Endothelial cell of umbilical vein (primary cell): ENCODE measurements at regions of chr1 and their contacts with region 1.

Region 1: DNA sequence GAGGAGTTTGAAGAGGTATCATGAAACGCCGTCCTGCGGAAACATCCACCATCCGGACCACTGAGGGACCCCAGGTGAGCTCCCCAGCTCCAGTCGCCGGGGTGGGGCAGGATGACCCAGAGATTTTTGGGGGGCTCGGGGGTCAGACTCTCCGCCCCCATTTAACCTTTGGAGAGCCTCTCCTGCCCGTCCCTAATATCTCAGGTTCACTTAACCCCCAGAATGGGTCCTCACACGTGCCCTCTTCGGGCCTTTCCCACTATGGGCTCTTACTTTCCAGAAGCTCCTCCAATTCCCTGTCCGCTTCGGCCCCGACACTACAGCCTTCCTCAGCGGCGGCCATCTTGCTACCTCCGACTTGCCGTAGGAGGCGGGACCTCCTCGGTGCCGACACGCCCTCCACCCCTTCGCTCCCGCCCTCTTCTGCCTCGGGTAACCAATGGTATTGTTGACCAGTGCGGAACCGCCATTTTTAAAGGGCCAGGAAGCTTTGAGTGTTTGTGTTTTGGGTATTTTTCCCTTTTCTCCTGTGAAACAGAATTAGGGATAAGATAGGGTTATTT is at the start of gene PEX19:
- DNase-seq: peak; percentile 95
- H3K4me3 ChIP-seq: peak within 1 kb of the TSS; percentile 65 to 83 (median 72)
- H3K27ac ChIP-seq: peak within 1 kb of the TSS; percentile 45
- H3K4me1 ChIP-seq: peaks cover 9% of the 10 kb centered on the region
- H3K27me3 ChIP-seq: no peaks in the 10 kb centered on the region
- CTCF ChIP-seq: no peak
- POLR2A ChIP-seq: peak; percentile 87
- total RNA-seq, gene PEX19: 31.5 and 38.4 TPM in 2 replicates

Region 2: GRCh38 chr1:159979257-159979656 is 305.6 kb before region 1 on chr1:
- CTCF ChIA-PET with region 1: no interaction called
- POLR2A ChIA-PET with region 1: no interaction called
- dilution Hi-C with region 1: no loop called
- intact Hi-C with region 1: no loop called
- DNase-seq: no peak
- H3K4me3 ChIP-seq: no peak overlapping the region
- H3K27ac ChIP-seq: no peak overlapping the region
- H3K4me1 ChIP-seq: no peaks in the 10 kb centered on the region
- H3K27me3 ChIP-seq: peaks cover 12 to 13% of the 10 kb centered on the region in 2 experiments
- CTCF ChIP-seq: no peak
- POLR2A ChIP-seq: no peak

Region 3: GRCh38 chr1:160205242-160206035 is 79.4 kb before region 1 on chr1 and contains the start of gene PEA15:
- CTCF ChIA-PET with region 1: interaction called, 3 read pairs
- POLR2A ChIA-PET with region 1: no interaction called
- dilution Hi-C with region 1: no loop called
- intact Hi-C with region 1: loop called (anchors 2 kb)
- DNase-seq: peak; percentile 54
- H3K4me3 ChIP-seq: peak within 1 kb of the TSS; percentile 55 to 81 (median 72)
- H3K27ac ChIP-seq: peak within 1 kb of the TSS; percentile 73
- H3K4me1 ChIP-seq: peaks cover 45% of the 10 kb centered on the region
- H3K27me3 ChIP-seq: no peaks in the 10 kb centered on the region
- CTCF ChIP-seq: no peak
- POLR2A ChIP-seq: no peak
- total RNA-seq, gene PEA15: 250 and 270 TPM in 2 replicates

Region 4: GRCh38 chr1:160261893-160262794 is 22.7 kb before region 1 on chr1 and contains the start of gene DCAF8:
- CTCF ChIA-PET with region 1: interaction called, 9 read pairs
- POLR2A ChIA-PET with region 1: interaction called, 7 read pairs
- dilution Hi-C with region 1: no loop called
- intact Hi-C with region 1: loop called (anchors 1 kb)
- DNase-seq: peak; percentile 99
- H3K4me3 ChIP-seq: peak within 1 kb of the TSS; percentile 27 to 87 (median 64)
- H3K27ac ChIP-seq: peak within 1 kb of the TSS; percentile 74
- H3K4me1 ChIP-seq: peaks cover 15% of the 10 kb centered on the region
- H3K27me3 ChIP-seq: no peaks in the 10 kb centered on the region
- CTCF ChIP-seq: no peak
- POLR2A ChIP-seq: peak; percentile 91
- total RNA-seq, gene DCAF8: 99.9 and 106 TPM in 2 replicates

Region 5: DNA sequence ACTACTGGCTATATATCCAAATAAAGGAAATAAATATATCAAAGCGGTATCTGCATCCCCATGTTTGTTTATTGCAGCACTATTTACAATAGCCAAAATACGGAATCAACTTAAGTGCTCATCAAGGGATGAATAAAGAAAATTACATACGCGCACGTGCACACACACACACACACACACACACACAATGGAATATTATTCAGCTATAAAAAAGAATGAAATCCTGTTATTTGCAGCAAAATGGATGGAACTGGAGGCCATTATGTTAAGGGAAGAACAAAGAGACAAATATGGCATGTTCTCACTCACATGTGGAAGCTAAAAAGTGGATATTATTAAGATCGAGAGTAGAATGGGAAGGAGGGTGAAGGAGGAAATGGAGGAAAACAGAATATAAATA is 38.0 kb after region 1 on chr1:
- CTCF ChIA-PET with region 1: interaction called, 3 read pairs
- POLR2A ChIA-PET with region 1: no interaction called
- dilution Hi-C with region 1: no loop called
- intact Hi-C with region 1: loop called (anchors 5 kb)
- DNase-seq: no peak
- H3K4me3 ChIP-seq: no peak overlapping the region
- H3K27ac ChIP-seq: no peak overlapping the region
- H3K4me1 ChIP-seq: no peaks in the 10 kb centered on the region
- H3K27me3 ChIP-seq: no peaks in the 10 kb centered on the region
- CTCF ChIP-seq: no peak
- POLR2A ChIP-seq: no peak

Region 6: DNA sequence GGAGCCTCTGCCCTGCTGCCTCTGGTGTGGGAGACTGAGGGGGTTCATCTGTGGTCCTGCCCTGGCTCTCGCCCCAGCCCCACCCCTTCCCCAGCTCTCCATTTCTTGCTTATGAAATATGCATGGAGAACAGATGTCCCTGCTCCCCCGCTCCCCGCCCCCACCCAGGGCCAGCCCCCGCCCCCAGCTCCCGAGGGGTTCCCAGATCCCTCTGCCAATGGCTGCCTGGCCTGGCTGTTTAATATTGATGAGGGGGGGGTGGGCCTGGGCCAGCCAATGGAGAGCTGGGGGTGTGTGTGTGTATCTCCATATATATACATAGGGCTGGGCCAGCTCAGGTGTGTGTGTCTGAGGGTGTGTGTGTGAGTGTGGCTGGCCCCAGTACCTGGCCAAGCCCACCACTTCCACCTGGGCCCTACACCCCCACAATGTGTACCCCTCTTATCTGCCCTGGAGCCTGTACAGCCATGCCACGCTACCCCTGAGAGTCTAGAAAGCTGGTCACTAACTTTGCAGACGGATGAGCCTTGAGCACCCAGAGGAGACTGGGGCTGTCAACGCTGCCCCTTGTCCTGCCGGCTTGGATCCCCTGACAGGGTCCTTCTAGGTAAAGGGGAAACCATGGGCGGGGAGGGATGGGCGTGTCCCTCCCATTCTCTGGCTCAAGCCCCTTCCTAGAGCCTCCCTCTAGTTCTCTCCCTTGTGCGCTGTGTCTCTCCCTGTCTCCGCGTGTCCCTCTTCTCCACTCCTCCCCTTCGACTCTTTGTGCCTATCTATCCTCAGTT is 82.1 kb after region 1 on chr1 and contains the start of gene NHLH1:
- CTCF ChIA-PET with region 1: no interaction called
- POLR2A ChIA-PET with region 1: no interaction called
- dilution Hi-C with region 1: no loop called
- intact Hi-C with region 1: no loop called
- DNase-seq: no peak
- H3K4me3 ChIP-seq: no peak within 1 kb of the TSS
- H3K27ac ChIP-seq: no peak within 1 kb of the TSS
- H3K4me1 ChIP-seq: no peaks in the 10 kb centered on the region
- H3K27me3 ChIP-seq: peaks cover 3 to 11% of the 10 kb centered on the region in 2 experiments
- CTCF ChIP-seq: no peak
- POLR2A ChIP-seq: no peak
- total RNA-seq, gene NHLH1: 0.16 and 0.46 TPM in 2 replicates

Region 7: DNA sequence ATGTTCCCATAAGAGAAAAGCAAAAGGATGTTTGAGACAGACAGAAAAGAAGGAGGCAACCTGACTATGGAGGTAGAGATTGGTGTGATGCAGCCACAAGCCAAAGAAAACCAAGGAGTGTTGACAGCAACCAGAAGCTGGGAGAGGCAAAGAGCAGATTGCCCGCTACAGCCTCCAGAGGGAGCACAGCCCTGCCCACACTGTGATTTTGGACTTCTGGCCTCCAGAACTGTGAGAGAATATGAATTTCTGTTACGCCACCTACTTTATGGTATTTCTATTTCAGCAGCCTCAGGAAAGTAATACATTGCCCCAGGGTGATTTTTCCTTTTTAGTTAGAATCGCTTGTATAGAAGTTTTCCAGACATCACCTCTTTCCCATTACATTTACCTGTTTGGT is 209.8 kb after region 1 on chr1:
- CTCF ChIA-PET with region 1: no interaction called
- POLR2A ChIA-PET with region 1: no interaction called
- dilution Hi-C with region 1: no loop called
- intact Hi-C with region 1: no loop called
- DNase-seq: no peak
- H3K4me3 ChIP-seq: no peak overlapping the region
- H3K27ac ChIP-seq: no peak overlapping the region
- H3K4me1 ChIP-seq: no peaks in the 10 kb centered on the region
- H3K27me3 ChIP-seq: no peaks in the 10 kb centered on the region
- CTCF ChIP-seq: peak in 1 of 2 donors; percentile 38
- POLR2A ChIP-seq: no peak